ENCODE measurements at regions of chr2 and their contacts with region 1.

Region 1: GRCh38 chr2:237674731-237675276 is 47.4 kb downstream of the LRRFIP1 start:
- DNase-seq: peak; percentile 90 to 98 (median 94)
- H3K4me3 ChIP-seq: peak overlapping the region; percentile 1 to 49
- H3K4me3 Mint-ChIP-seq: peak overlapping the region; percentile 85 to 94 (median 92)
- H3K27ac ChIP-seq: peak overlapping the region; percentile 92
- H3K27ac Mint-ChIP-seq: peak overlapping the region; percentile 95 to 100 (median 100)
- H3K4me1 ChIP-seq: peaks cover 47% of the 10 kb centered on the region
- H3K4me1 Mint-ChIP-seq: peaks cover 38 to 53% (median 47%) of the 10 kb centered on the region in 4 donors
- H3K27me3 ChIP-seq: no peaks in the 10 kb centered on the region
- H3K27me3 Mint-ChIP-seq: peaks cover 0 to 1% of the 10 kb centered on the region in 2 donors

Region 2: DNA sequence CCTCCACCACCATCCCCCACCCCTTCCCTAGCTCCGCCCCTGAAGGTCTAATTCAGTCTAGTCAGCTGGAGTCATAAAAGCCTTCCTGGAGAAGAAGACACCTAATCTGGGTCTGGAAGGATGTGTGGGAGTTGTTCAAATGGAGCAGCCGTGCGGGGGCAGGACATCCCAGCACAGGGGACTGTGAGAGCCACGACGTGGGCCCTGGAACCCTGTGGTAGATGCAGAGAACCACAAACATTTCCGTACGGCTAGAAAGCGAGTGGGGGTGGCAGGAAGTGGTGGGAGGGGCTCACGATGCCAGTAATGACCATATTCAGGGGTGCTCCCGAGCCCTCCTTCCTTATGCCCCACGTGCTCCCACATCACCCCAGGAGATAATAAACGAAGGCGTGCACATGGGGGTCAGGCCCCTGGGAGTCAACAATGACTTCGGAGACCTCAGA is 239.9 kb before region 1 on chr2:
- CTCF ChIA-PET with region 1: no interaction called
- POLR2A ChIA-PET with region 1: interaction called, 3 read pairs
- intact Hi-C with region 1: loop called (anchors 10 kb)
- DNase-seq: peak; percentile 60 to 80 (median 68)
- H3K4me3 ChIP-seq: peak overlapping the region; percentile 27 to 51
- H3K4me3 Mint-ChIP-seq: peak overlapping the region; percentile 67 to 94 (median 80)
- H3K27ac ChIP-seq: peak overlapping the region; percentile 52
- H3K27ac Mint-ChIP-seq: peak overlapping the region; percentile 73 to 94 (median 84)
- H3K4me1 ChIP-seq: peaks cover 85% of the 10 kb centered on the region
- H3K4me1 Mint-ChIP-seq: peaks cover 58 to 84% (median 71%) of the 10 kb centered on the region in 4 donors
- H3K27me3 ChIP-seq: no peaks in the 10 kb centered on the region
- H3K27me3 Mint-ChIP-seq: no peaks in the 10 kb centered on the region

Region 3: DNA sequence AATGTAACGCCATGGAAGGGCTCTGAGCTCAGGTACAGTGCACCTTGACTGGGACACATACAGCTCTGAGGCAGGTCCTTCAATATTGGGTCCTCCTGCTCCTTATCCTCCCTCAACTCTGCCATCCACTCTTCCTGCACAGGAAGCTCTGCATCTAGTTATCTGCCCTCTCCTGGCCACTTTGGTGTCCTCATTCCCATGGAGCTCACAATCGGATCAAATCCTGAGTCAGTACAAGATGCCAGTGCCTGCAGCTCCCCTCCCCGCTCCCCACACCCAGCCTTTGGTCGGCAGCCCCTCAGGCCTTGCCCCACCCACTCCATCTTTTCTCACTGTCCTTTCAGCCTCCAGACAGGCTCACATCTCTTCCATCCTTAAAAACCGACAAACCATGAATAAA is 10.6 kb after region 1 on chr2:
- CTCF ChIA-PET with region 1: interaction called, 376 read pairs
- POLR2A ChIA-PET with region 1: interaction called, 607 read pairs
- intact Hi-C with region 1: loop called (anchors 1 kb)
- DNase-seq: no peak
- H3K4me3 ChIP-seq: no peak overlapping the region
- H3K4me3 Mint-ChIP-seq: no peak overlapping the region
- H3K27ac ChIP-seq: no peak overlapping the region
- H3K27ac Mint-ChIP-seq: peak overlapping the region in 6 of 7 donors; percentile 60 to 100 (median 100)
- H3K4me1 ChIP-seq: peaks cover 46% of the 10 kb centered on the region
- H3K4me1 Mint-ChIP-seq: peaks cover 42 to 61% (median 48%) of the 10 kb centered on the region in 4 donors
- H3K27me3 ChIP-seq: no peaks in the 10 kb centered on the region
- H3K27me3 Mint-ChIP-seq: no peaks in the 10 kb centered on the region

Region 4: DNA sequence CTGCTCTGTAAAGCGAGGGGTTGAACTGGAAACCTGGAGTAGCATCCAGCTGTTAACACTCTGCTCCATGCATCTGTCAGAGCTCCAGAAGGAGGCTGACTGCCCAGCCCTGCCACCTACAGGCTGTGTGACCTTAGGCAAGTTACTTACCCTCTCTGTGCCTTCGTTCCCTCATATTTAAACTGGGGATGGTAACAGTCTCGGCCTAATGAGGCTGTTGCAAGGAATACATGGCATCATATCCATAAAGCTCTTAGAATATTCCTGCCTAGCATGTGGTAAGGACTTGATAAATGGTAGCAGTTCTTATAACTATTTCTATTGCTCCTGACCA is 33.2 kb after region 1 on chr2:
- CTCF ChIA-PET with region 1: interaction called, 82 read pairs
- POLR2A ChIA-PET with region 1: interaction called, 50 read pairs
- intact Hi-C with region 1: loop called (anchors 5 kb)
- DNase-seq: no peak
- H3K4me3 ChIP-seq: no peak overlapping the region
- H3K4me3 Mint-ChIP-seq: no peak overlapping the region
- H3K27ac ChIP-seq: peak overlapping the region; percentile 12
- H3K27ac Mint-ChIP-seq: peak overlapping the region in 6 of 7 donors; percentile 42 to 96 (median 78)
- H3K4me1 ChIP-seq: peaks cover 60% of the 10 kb centered on the region
- H3K4me1 Mint-ChIP-seq: peaks cover 43 to 82% (median 64%) of the 10 kb centered on the region in 4 donors
- H3K27me3 ChIP-seq: no peaks in the 10 kb centered on the region
- H3K27me3 Mint-ChIP-seq: no peaks in the 10 kb centered on the region

Region 5: DNA sequence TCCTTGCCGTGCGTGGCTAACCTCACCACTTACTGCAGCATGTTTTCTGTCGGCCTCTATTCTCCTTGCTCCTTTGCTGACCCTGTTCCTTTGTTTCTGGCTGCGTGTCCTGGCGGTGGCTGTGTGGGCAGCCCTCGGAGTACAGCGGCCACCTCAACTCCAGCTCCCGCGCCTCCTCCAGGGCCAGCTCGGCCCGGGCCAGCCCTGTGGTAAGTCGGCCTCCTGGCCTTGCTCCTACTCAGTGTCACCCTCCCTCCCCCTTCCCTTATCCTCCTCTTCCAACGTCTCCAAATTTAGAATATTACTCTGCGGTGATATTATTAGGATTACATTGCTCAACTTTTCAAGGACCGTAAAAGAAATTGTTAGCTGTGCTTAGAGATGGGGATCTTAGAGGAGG is 64.3 kb after region 1 on chr2:
- CTCF ChIA-PET with region 1: interaction called, 434 read pairs
- POLR2A ChIA-PET with region 1: interaction called, 75 read pairs
- intact Hi-C with region 1: no loop called
- DNase-seq: no peak
- H3K4me3 ChIP-seq: no peak overlapping the region
- H3K4me3 Mint-ChIP-seq: no peak overlapping the region
- H3K27ac ChIP-seq: no peak overlapping the region
- H3K27ac Mint-ChIP-seq: peak overlapping the region in 6 of 7 donors; percentile 38 to 78 (median 60)
- H3K4me1 ChIP-seq: peaks cover 24% of the 10 kb centered on the region
- H3K4me1 Mint-ChIP-seq: peaks cover 37 to 76% (median 61%) of the 10 kb centered on the region in 4 donors
- H3K27me3 ChIP-seq: no peaks in the 10 kb centered on the region
- H3K27me3 Mint-ChIP-seq: no peaks in the 10 kb centered on the region

Region 6: GRCh38 chr2:237774802-237775553 is 100.2 kb after region 1 on chr2:
- CTCF ChIA-PET with region 1: interaction called, 9 read pairs
- POLR2A ChIA-PET with region 1: interaction called, 5 read pairs
- intact Hi-C with region 1: loop called (anchors 1 kb)
- DNase-seq: peak in 3 of 5 donors; percentile 16 to 21 (median 17)
- H3K4me3 ChIP-seq: no peak overlapping the region
- H3K4me3 Mint-ChIP-seq: no peak overlapping the region
- H3K27ac ChIP-seq: no peak overlapping the region
- H3K27ac Mint-ChIP-seq: peak overlapping the region in 3 of 7 donors; percentile 66 to 83 (median 72)
- H3K4me1 ChIP-seq: no peaks in the 10 kb centered on the region
- H3K4me1 Mint-ChIP-seq: peaks cover 0 to 5% (median 0%) of the 10 kb centered on the region in 4 donors
- H3K27me3 ChIP-seq: no peaks in the 10 kb centered on the region
- H3K27me3 Mint-ChIP-seq: no peaks in the 10 kb centered on the region

Region 7: GRCh38 chr2:238263204-238264071 is 588.6 kb after region 1 on chr2:
- CTCF ChIA-PET with region 1: interaction called, 5 read pairs
- POLR2A ChIA-PET with region 1: no interaction called
- intact Hi-C with region 1: loop called (anchors 1 kb)
- DNase-seq: peak; percentile 64 to 70 (median 68)
- H3K4me3 ChIP-seq: no peak overlapping the region
- H3K4me3 Mint-ChIP-seq: peak overlapping the region in 2 of 8 donors; percentile 30 to 43
- H3K27ac ChIP-seq: no peak overlapping the region
- H3K27ac Mint-ChIP-seq: peak overlapping the region in 2 of 7 donors; percentile 25 to 52
- H3K4me1 ChIP-seq: no peaks in the 10 kb centered on the region
- H3K4me1 Mint-ChIP-seq: peaks cover 7 to 18% (median 9%) of the 10 kb centered on the region in 4 donors
- H3K27me3 ChIP-seq: no peaks in the 10 kb centered on the region
- H3K27me3 Mint-ChIP-seq: no peaks in the 10 kb centered on the region